Adrenal gland (tissue), 19 donors: ENCODE measurements at regions of chr10 and their contacts with region 1.

Region 1: GRCh38 chr10:63217120-63217605 is 84.0 kb downstream of the NRBF2 start:
- DNase-seq: peak in 1 of 7 donors; percentile 29
- H3K4me3 ChIP-seq: no peak overlapping the region
- H3K27ac ChIP-seq: no peak overlapping the region
- H3K4me1 ChIP-seq: peaks cover 0 to 37% of the 10 kb centered on the region in 2 donors
- H3K27me3 ChIP-seq: no peaks in the 10 kb centered on the region
- CTCF ChIP-seq: peak; percentile 50 to 86 (median 74)
- POLR2A ChIP-seq: no peak

Region 2: GRCh38 chr10:63083904-63084689 is 133.1 kb before region 1 on chr10:
- intact Hi-C with region 1: no loop called
- DNase-seq: peak; percentile 32 to 81 (median 64)
- H3K4me3 ChIP-seq: no peak overlapping the region
- H3K27ac ChIP-seq: no peak overlapping the region
- H3K4me1 ChIP-seq: no peaks in the 10 kb centered on the region
- H3K27me3 ChIP-seq: no peaks in the 10 kb centered on the region
- CTCF ChIP-seq: peak; percentile 52 to 83 (median 76)
- POLR2A ChIP-seq: no peak

Region 3: DNA sequence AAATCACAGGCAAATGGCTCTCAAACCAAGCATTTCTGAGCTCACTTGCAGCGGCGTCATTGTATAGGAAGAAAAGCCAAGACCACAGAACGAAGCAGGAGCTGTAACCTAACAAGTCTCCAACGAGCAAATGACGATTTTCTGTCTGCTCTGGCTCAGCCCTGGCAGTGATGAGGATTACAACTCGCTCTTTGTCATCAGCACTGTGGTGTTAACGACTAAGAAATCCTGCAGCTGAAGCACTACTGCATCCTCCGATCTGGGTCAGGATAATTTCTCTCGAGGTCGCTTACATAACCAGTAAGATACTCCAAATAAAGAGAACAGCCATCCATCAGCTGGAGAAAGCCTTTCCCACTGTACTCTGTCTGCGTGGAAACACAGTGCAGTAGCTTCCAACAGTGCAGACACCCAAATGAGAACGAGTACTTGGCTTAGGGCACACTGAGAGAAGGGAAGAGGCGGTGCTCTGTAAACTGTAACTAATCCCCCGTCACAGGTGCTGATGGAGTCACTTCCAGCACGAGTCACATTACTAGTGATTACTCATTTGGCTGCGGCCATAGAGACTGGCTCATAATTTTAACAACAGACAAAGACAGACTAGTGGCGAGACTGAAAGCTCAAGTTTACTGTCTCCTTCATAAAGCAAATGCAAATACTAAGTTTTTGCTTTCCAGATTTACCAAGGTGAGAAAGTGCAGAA is 51.8 kb after region 1 on chr10:
- intact Hi-C with region 1: loop called in 1 of 2 experiments (anchors 10 kb)
- DNase-seq: peak; percentile 77 to 94 (median 88)
- H3K4me3 ChIP-seq: peak overlapping the region in 3 of 4 donors; percentile 22 to 74 (median 43)
- H3K27ac ChIP-seq: peak overlapping the region; percentile 88 to 95 (median 91)
- H3K4me1 ChIP-seq: peaks cover 10 to 36% of the 10 kb centered on the region in 2 donors
- H3K27me3 ChIP-seq: no peaks in the 10 kb centered on the region
- CTCF ChIP-seq: peak in 5 of 6 experiments; percentile 40 to 65 (median 55)
- POLR2A ChIP-seq: peak; percentile 89 to 95

Region 4: DNA sequence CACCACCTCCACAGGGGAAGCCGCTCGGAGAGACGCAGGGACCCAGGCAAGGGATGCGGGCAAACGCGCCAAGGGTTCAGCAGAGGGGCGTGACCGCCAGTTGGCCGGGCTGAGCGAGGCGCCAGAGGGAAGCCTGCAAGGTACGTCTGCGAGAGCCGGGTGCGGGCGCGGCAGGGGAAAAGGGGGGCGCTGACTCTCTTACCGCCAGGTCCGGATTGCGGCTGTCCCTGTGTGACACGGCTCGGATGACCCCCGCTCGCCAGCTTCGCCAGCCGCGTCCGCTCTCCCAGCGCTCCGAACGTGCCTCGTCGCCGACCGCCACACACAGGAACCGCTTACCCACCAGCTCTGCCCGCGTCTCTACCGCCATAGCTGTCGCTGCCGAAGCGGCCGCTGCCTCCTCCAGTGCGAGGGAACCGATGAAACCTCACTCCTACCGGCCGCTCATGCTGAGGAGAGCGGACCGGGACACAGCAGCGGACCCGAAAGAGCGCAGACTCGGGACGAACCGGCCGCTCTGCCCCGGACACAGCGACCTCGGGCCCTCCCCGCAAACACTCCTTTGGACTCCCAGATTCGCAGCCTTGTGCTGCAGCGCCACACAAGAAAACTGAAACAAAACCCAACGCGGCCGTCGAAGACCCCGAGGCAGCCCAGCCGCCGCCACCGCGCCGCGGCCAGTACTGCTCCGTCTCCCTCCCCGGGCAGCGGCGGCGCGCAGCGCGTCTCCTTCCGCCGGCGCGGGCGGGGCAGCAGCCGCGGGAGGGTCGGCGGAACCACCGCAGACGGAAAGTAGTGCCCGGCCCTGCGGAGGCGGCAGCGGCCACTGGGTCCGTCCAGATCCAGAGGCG is 248.4 kb after region 1 on chr10 and contains the start of gene JMJD1C:
- intact Hi-C with region 1: loop called in 1 of 2 experiments (anchors 10 kb)
- DNase-seq: peak; percentile 78 to 84 (median 80)
- H3K4me3 ChIP-seq: peak within 1 kb of the TSS; percentile 39 to 86 (median 80)
- H3K27ac ChIP-seq: peak within 1 kb of the TSS; percentile 53 to 94 (median 91)
- H3K4me1 ChIP-seq: peaks cover 0 to 26% of the 10 kb centered on the region in 2 donors
- H3K27me3 ChIP-seq: no peaks in the 10 kb centered on the region
- CTCF ChIP-seq: peak in 1 of 6 experiments; percentile 14
- POLR2A ChIP-seq: peak; percentile 81 to 83
- total RNA-seq, gene JMJD1C: 36.0 to 124 (median 61.4) TPM